ENCODE measurements at regions of chr11 and their contacts with region 1.

Region 1: GRCh38 chr11:1943977-1944376 is 3.2 kb upstream of the MRPL23 start:
- DNase-seq: no peak
- ATAC-seq: no peak
- H3K4me3 ChIP-seq: no peak overlapping the region
- H3K27ac ChIP-seq: peak overlapping the region in 7 of 10 donors; percentile 6 to 55 (median 35)
- H3K4me1 ChIP-seq: peaks cover 0 to 19% (median 7%) of the 10 kb centered on the region in 9 donors
- H3K27me3 ChIP-seq: no peaks in the 10 kb centered on the region
- CTCF ChIP-seq: no peak

Region 2: DNA sequence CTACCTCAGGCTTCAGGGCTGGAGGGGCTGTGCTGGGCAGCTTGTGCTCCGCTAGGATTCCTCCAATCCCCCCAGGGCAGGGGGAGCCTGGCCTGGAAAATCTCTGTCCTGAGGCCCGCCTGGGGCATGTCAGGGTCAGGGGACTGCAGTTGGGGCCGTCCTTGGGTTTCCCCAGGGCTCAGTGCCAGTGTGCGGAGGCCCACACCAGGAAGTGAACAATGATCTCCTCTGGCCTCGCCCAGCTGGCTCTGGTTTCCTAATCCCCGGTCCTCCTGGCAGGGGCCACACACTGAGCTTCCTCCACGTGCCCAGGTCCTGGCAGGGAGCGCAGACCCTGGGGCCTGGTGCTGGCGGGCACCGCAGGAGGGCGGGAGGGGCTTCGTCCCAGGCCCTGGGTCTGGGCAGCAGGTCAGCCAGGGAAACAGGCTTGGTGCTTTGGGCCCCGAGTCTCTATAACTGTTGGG is 870.7 kb before region 1 on chr11:
- intact Hi-C with region 1: no loop called
- DNase-seq: peak; percentile 46 to 57
- ATAC-seq: peak; percentile 36 to 83 (median 52)
- H3K4me3 ChIP-seq: no peak overlapping the region
- H3K27ac ChIP-seq: peak overlapping the region in 2 of 10 donors; percentile 26 to 39
- H3K4me1 ChIP-seq: peaks cover 4 to 27% (median 15%) of the 10 kb centered on the region in 9 donors
- H3K27me3 ChIP-seq: peaks cover 0 to 25% (median 0%) of the 10 kb centered on the region in 7 donors
- CTCF ChIP-seq: no peak

Region 3: DNA sequence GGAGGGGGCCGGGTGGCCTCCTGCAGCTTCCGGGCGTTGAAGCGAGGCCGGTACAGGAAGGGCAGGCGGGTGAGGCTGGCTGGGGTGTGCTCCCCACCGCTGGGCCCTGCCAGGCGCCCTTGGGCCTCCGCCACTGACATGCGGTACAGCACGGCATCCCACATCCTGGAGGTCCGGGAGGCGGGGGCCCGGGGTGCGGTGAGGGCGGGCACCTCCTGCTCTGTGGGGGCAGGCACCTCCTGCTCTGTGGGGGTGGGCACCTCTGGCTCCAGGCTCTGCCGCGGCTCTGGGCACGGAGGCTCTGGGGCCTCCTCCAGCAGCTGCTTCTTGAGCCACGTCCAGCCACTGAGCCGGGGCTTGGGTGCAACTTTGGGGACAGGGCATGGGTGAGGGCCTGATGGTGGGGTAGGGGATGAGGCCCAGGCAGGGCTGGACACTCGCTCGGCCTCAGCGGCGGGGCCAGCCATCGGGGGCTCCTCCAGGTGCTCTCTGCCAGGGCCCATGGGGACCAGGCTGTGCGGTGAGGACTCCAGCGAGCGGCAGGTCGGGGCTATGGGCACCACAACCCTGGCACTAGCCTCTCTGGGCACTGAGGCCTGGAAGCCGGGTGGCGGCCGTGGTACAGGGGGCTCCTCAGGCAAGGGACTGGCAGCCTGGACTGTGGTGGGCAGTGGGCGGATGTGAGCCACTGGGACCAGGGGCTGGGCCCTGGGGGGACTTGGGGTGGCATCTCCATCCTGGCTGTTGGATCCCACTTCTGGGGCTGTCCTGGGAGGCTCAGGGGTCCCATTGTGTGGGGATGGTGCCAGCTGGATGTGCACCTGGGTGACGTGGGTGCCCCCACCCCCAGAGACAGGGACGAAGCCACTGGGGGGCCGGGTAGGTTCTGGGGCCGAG is 54.5 kb before region 1 on chr11:
- intact Hi-C with region 1: loop called in 5 of 10 experiments (anchors 1 to 10 kb)
- DNase-seq: peak in 1 of 2 donors; percentile 50
- ATAC-seq: peak in 5 of 8 donors; percentile 2 to 38 (median 19)
- H3K4me3 ChIP-seq: peak overlapping the region in 1 of 10 donors; percentile 12
- H3K27ac ChIP-seq: peak overlapping the region in 3 of 10 donors; percentile 23 to 68 (median 48)
- H3K4me1 ChIP-seq: peaks cover 0 to 43% (median 6%) of the 10 kb centered on the region in 9 donors
- H3K27me3 ChIP-seq: peaks cover 0 to 4% (median 0%) of the 10 kb centered on the region in 7 donors
- CTCF ChIP-seq: no peak

Region 4: DNA sequence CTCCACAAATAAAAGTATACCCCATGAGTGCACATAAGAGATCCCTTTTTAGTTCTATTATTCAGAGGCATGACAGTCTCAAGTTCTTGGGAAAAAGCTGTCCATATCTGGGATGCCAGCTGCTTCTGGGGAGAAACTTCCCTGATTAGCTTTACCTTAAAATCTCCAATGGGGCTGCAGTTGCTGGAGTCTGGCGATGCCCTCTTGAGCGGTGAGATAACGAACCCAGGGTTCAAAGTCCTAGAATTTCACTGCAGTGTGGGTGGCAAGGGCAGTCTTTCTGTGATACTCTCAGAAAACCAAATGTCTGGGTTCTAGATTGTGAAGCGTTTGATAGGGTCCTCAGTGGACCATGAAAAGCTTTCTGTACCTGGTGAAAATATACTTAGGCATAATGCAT is 44.9 kb before region 1 on chr11:
- intact Hi-C with region 1: loop called in 6 of 10 experiments (anchors 1 to 10 kb)
- DNase-seq: no peak
- ATAC-seq: no peak
- H3K4me3 ChIP-seq: no peak overlapping the region
- H3K27ac ChIP-seq: peak overlapping the region in 1 of 10 donors; percentile 48
- H3K4me1 ChIP-seq: peaks cover 0 to 9% (median 0%) of the 10 kb centered on the region in 9 donors
- H3K27me3 ChIP-seq: no peaks in the 10 kb centered on the region
- CTCF ChIP-seq: no peak

Measured in heart right ventricle (tissue), 16 donors.